Activated naive CD8-positive, alpha-beta T cell treated with anti-CD3 and anti-CD28 coated beads, Interleukin-2, amount 10 ng/mL, durations not matched to agents 7 days and 5 days (primary cell): ENCODE measurements at regions of chr19 and their contacts with region 1.

Region 1: GRCh38 chr19:38402967-38403861 is at the start of gene FAM98C:
- DNase-seq: peak; percentile 99
- ATAC-seq: peak; percentile 99
- H3K4me3 Mint-ChIP-seq: peak within 1 kb of the TSS; percentile 95
- H3K27ac Mint-ChIP-seq: peak within 1 kb of the TSS; percentile 96
- H3K4me1 Mint-ChIP-seq: peaks cover 6% of the 10 kb centered on the region
- H3K27me3 Mint-ChIP-seq: peaks cover 11% of the 10 kb centered on the region
- total RNA-seq, gene FAM98C: 32.5 to 37.7 TPM

Region 2: DNA sequence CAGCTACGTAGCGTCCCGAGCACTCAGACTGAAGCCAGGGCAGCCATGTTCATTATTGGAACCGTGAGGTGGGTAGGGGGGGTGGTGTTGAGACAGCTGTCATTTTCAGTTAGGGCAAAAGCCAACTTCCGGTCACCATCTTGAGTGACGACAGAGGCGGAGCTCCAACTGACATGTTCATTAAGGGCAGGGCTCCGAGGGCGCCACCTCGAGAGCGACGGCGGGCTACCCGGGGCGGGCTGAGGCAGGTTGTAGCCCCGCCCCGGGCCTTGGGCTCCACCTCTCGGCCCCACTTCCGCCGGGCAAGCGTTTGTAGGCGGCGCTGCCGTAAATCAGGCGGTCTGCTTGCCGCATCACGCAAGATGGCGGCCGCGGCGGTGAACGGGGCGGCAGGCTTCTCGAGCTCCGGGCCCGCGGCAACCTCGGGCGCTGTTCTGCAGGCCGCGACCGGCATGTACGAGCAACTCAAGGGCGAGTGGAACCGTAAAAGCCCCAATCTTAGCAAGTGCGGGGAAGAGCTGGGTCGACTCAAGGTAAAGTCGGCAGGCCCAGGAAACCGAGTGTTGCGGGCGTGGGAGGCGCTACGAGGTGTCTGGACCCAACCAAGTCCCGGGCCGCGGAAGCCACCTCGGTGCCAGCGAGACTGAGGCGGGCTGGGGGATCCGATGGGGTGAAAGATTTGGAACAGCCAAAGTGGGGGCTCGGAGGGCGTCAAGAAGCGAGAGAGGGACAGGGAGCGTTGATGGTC is 28.6 kb before region 1 on chr19 and contains the start of gene PSMD8:
- POLR2A ChIA-PET with region 1: interaction called, 15 read pairs
- DNase-seq: peak; percentile 98
- ATAC-seq: peak; percentile 97
- H3K4me3 Mint-ChIP-seq: peak within 1 kb of the TSS; percentile 99
- H3K27ac Mint-ChIP-seq: peak within 1 kb of the TSS; percentile 98
- H3K4me1 Mint-ChIP-seq: peaks cover 23% of the 10 kb centered on the region
- H3K27me3 Mint-ChIP-seq: peaks cover 2% of the 10 kb centered on the region
- total RNA-seq, gene PSMD8: 127 to 131 TPM

Region 3: DNA sequence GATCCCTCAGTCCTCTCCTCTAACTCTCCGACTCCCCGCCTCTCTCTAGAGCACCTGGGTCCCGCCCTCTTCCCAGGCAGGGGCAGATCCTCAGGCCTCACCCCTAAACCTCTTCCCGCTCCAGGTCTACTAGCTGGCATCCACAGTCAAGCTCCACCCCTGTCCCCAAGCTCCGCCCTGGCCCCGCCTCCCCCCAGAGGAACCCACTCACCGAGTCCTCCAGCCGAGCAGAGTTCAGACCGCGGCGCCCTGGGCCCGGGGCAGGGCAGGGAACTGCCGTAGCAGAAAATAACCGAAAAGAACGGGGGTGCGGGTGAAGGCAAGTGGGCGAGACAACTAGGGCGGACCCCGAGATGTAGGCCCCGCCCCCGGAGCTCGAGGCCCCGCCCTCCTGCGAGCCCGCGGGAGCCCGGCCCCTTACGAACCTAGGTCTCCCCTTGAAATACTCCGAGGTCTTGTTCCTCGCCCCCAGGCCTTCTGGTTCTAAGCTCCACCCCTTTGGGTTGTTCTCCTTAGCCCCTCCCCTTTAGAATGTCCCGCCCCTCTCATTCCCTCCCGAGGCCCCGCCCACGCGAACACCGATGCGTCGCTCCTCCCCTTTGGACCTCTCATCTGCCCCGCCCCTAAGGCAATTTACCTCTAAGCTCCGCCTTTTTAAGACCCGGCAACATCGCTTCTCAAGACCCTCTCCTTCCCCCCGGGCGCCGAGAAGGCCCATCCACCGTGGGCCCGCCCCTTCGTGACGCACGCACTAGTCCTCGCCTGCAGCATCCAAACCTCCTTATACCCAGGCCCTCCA is 15.5 kb before region 1 on chr19 and contains the start of gene GGN:
- POLR2A ChIA-PET with region 1: interaction called, 10 read pairs
- DNase-seq: peak; percentile 79
- ATAC-seq: peak; percentile 74
- H3K4me3 Mint-ChIP-seq: peak within 1 kb of the TSS; percentile 93
- H3K27ac Mint-ChIP-seq: no peak within 1 kb of the TSS
- H3K4me1 Mint-ChIP-seq: peaks cover 11% of the 10 kb centered on the region
- H3K27me3 Mint-ChIP-seq: peaks cover 38% of the 10 kb centered on the region
- total RNA-seq, gene GGN: not detected

Region 4: GRCh38 chr19:38478273-38478967 is 75.2 kb after region 1 on chr19:
- POLR2A ChIA-PET with region 1: no interaction called
- DNase-seq: no peak
- ATAC-seq: no peak
- H3K4me3 Mint-ChIP-seq: no peak overlapping the region
- H3K27ac Mint-ChIP-seq: no peak overlapping the region
- H3K4me1 Mint-ChIP-seq: peaks cover 3% of the 10 kb centered on the region
- H3K27me3 Mint-ChIP-seq: peaks cover 23% of the 10 kb centered on the region

Region 5: DNA sequence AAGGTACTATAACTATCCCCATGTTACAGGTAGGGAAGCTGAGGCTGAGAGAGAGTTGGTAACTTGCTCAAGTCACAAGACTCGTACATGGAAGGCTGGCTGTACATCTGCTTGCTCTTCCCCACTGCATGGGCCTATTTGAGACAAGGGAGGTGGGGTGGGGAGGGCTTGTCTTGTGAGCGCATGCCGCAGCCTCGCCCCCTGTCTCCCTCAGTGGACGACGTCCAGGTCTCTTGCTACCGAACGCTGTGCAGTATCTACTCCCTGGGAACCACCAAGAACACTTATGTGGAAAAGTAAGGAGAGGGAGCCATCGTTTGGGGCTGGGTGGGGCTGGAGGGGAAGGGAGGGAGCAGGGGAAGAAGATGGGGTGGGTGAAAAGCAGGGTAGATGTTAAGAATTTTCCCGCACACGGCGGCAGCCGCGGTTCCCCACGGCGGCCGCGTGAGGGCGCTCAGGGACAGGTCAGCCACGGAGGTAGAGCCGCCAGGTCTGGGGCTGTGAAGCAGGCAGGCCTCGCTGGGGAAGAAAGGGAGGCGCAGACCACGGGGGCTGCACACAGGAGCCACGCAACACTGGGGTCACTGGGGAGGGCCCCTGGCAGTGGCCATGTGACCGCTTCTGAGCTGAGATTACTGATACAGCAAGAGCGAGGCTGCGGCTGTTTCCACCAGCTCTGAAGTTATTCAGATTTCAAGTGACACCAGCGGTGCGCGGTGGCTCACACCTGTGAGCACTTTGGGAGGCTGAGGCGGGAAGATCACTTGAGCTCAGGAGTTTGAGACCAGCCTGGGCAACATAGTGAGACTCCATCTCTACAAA is 111.8 kb after region 1 on chr19:
- POLR2A ChIA-PET with region 1: interaction called, 13 read pairs
- DNase-seq: peak; percentile 89
- ATAC-seq: peak; percentile 64
- H3K4me3 Mint-ChIP-seq: peak overlapping the region; percentile 42
- H3K27ac Mint-ChIP-seq: peak overlapping the region; percentile 69
- H3K4me1 Mint-ChIP-seq: peaks cover 21% of the 10 kb centered on the region
- H3K27me3 Mint-ChIP-seq: peaks cover 19% of the 10 kb centered on the region

Region 6: GRCh38 chr19:38618590-38619360 is 215.6 kb after region 1 on chr19 and contains the start of gene EIF3K:
- POLR2A ChIA-PET with region 1: interaction called, 23 read pairs
- DNase-seq: peak; percentile 99
- ATAC-seq: peak; percentile 65
- H3K4me3 Mint-ChIP-seq: peak within 1 kb of the TSS; percentile 93
- H3K27ac Mint-ChIP-seq: peak within 1 kb of the TSS; percentile 96
- H3K4me1 Mint-ChIP-seq: peaks cover 36% of the 10 kb centered on the region
- H3K27me3 Mint-ChIP-seq: no peaks in the 10 kb centered on the region
- total RNA-seq, gene EIF3K: 307 to 308 TPM